Dorsolateral prefrontal cortex (tissue), 120 donors: ENCODE measurements at regions of chr13 and their contacts with region 1.

Region 1: GRCh38 chr13:26698392-26699196 is 62.0 kb downstream of the GPR12 start:
- DNase-seq: peak; percentile 73 to 92 (median 86)
- H3K4me3 ChIP-seq: peak overlapping the region in 50 of 59 donors; percentile 10 to 59 (median 41)
- H3K27ac ChIP-seq: peak overlapping the region in 8 of 59 donors; percentile 8 to 76 (median 40)
- H3K27me3 ChIP-seq: no peaks in the 10 kb centered on the region
- CTCF ChIP-seq: peak; percentile 96 to 100 (median 99)

Region 2: DNA sequence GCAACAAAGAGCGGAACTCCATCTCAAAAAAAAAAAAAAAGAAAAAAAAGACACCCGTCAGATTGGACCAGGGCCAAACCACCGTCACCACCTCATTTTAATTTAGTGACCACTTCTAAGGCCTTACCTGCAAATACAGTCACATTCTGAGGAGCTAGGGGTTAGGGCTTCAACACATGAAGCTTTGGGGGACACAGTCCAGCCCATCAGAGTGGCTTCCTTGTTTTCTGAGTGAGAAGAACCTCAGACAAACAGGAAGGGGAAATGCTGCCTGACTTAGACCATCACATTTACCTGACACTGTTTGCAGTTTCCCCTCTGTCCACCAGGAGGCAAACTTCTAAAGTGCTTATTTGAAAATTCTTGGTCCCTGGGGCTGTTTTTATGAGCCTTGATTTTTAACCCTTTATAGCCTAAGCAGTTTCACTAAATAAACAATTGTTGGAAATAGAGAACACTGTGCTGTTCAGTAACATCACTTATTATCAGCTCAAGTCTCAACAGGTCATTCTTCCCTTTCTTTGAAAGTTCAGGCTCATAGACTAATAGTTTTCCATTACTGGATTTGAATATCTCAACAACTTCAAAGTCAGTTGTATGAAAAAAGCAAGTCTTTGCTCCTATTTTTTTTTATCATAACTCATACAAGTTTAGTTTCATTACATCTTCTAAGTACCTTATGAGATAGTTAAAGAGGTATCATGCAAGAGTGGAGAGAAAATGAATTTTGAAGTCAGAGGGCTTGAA is 216.0 kb before region 1 on chr13:
- intact Hi-C with region 1: loop called (anchors 2 to 5 kb)
- DNase-seq: peak in 5 of 10 donors; percentile 39 to 75 (median 49)
- H3K4me3 ChIP-seq: peak overlapping the region in 1 of 59 donors; percentile 15
- H3K27ac ChIP-seq: no peak overlapping the region
- H3K27me3 ChIP-seq: no peaks in the 10 kb centered on the region
- CTCF ChIP-seq: peak; percentile 76 to 93 (median 85)

Region 3: DNA sequence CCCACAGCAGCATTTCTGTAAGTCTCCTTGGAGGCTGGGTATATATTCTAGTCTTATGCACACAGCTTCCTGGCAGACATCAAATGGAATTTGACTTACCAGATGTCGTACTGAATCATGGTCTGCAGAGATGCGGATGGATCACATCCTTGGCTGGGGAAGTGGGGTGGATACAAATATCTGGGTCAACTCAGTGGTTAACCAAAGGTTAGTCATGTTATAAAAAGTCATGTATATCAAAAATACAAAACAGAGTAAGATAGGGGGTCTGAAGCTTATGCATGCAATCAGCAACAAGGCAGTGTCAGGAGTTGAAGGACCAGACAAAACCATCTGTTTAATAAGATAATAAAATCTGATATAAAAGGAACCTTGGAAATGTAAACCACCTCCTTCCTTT is 79.2 kb before region 1 on chr13:
- intact Hi-C with region 1: no loop called
- DNase-seq: no peak
- H3K4me3 ChIP-seq: no peak overlapping the region
- H3K27ac ChIP-seq: no peak overlapping the region
- H3K27me3 ChIP-seq: no peaks in the 10 kb centered on the region
- CTCF ChIP-seq: no peak

Region 4: DNA sequence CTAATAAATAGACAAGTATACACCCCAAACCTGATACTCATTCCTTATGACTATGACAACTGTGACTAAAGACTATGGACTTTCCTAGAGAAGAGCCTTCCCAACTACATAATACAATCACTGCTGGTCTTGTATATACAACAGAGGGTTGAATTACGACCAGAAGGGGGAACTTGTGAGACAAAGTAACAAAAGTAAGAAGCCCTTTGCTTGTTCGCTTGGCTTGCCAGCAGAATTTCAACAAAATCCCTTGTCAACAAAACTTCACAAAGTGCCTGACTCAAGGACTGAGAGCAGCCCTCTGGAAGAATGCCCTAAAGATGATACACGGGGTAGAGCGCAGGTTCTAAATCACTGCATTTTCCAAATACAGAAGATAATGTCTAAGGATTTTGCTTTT is 41.7 kb before region 1 on chr13:
- intact Hi-C with region 1: loop called in 1 of 2 experiments (anchors 5 kb)
- DNase-seq: no peak
- H3K4me3 ChIP-seq: no peak overlapping the region
- H3K27ac ChIP-seq: peak overlapping the region in 2 of 59 donors; percentile 34 to 42
- H3K27me3 ChIP-seq: no peaks in the 10 kb centered on the region
- CTCF ChIP-seq: peak in 38 of 56 donors; percentile 7 to 62 (median 33)